CD4-positive, alpha-beta memory T cell (primary cell): ENCODE measurements at regions of chr14 and their contacts with region 1.

Region 1: GRCh38 chr14:105760691-105761346 is 234.4 kb downstream of the TMEM121 start:
- DNase-seq: no peak
- H3K4me3 ChIP-seq: no peak overlapping the region
- H3K4me3 Mint-ChIP-seq: no peak overlapping the region
- H3K27ac ChIP-seq: no peak overlapping the region
- H3K27ac Mint-ChIP-seq: no peak overlapping the region
- H3K4me1 ChIP-seq: no peaks in the 10 kb centered on the region
- H3K4me1 Mint-ChIP-seq: peaks cover 0 to 3% (median 0%) of the 10 kb centered on the region in 4 donors
- H3K27me3 ChIP-seq: no peaks in the 10 kb centered on the region
- H3K27me3 Mint-ChIP-seq: peaks cover 0 to 11% of the 10 kb centered on the region in 2 donors

Region 2: GRCh38 chr14:105448706-105449111 is 312.1 kb before region 1 on chr14:
- CTCF ChIA-PET with region 1: no interaction called
- POLR2A ChIA-PET with region 1: no interaction called
- intact Hi-C with region 1: no loop called
- DNase-seq: peak; percentile 52 to 77 (median 64)
- H3K4me3 ChIP-seq: no peak overlapping the region
- H3K4me3 Mint-ChIP-seq: no peak overlapping the region
- H3K27ac ChIP-seq: no peak overlapping the region
- H3K27ac Mint-ChIP-seq: peak overlapping the region in 2 of 7 donors; percentile 15 to 42
- H3K4me1 ChIP-seq: no peaks in the 10 kb centered on the region
- H3K4me1 Mint-ChIP-seq: no peaks in the 10 kb centered on the region
- H3K27me3 ChIP-seq: no peaks in the 10 kb centered on the region
- H3K27me3 Mint-ChIP-seq: no peaks in the 10 kb centered on the region

Region 3: DNA sequence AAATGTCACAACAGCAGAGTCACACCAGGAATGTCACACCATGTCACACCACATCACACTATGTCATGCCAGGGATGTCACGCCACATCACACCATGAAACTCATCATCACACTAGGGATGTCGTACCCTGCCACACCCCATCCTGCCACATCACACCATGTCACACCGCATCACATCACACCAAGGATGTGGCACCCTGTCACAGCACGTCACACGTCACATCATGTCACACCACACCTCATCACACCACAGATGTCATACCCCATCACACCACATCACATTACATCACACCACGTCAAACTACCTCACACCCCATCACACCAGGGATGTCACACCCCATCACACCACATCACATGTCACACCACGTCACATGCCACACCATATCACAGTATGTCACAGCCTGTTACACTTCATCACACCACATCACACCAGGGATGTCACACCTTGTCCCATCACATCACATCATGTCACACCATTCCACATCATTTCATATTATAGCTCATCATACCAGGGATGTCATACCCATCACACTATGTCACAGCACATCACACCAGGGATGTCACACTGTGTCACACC is 143.5 kb before region 1 on chr14:
- CTCF ChIA-PET with region 1: no interaction called
- POLR2A ChIA-PET with region 1: no interaction called
- intact Hi-C with region 1: loop called (anchors 2 kb)
- DNase-seq: no peak
- H3K4me3 ChIP-seq: no peak overlapping the region
- H3K4me3 Mint-ChIP-seq: no peak overlapping the region
- H3K27ac ChIP-seq: no peak overlapping the region
- H3K27ac Mint-ChIP-seq: no peak overlapping the region
- H3K4me1 ChIP-seq: no peaks in the 10 kb centered on the region
- H3K4me1 Mint-ChIP-seq: peaks cover 0 to 4% (median 0%) of the 10 kb centered on the region in 4 donors
- H3K27me3 ChIP-seq: no peaks in the 10 kb centered on the region
- H3K27me3 Mint-ChIP-seq: peaks cover 7 to 15% of the 10 kb centered on the region in 2 donors

Region 4: DNA sequence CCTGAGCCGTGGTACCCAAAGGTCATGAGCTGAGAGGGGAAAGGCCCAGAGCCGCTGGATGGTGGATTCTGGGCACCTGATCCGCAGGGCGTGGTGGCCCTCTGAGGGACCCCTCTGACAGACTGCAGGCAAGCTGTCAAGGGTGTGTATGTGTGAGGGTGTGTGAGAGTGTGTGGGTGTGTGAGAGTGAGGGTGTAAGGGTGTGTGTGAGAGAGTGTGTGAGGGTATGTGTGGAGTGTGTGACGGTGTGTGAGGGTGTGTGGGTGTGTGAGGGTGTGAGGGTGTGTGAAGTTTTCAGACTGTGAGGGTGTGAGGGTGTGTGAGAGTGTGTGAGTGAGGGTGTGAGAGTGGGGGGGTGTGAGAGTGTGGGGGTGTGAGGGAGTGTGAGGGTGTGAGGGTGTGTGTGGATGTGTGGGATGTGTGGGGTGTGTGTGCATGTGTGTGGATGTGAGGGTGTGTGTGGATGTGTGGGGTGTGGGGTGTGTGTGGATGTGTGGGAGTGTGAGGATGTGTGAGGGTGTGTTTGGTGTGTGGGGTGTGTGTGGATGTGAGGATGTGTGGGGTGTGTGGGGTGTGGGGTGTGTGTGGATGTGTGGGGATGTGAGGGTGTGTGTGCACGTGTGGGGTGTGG is 77.8 kb before region 1 on chr14:
- CTCF ChIA-PET with region 1: no interaction called
- POLR2A ChIA-PET with region 1: no interaction called
- intact Hi-C with region 1: no loop called
- DNase-seq: no peak
- H3K4me3 ChIP-seq: no peak overlapping the region
- H3K4me3 Mint-ChIP-seq: no peak overlapping the region
- H3K27ac ChIP-seq: no peak overlapping the region
- H3K27ac Mint-ChIP-seq: no peak overlapping the region
- H3K4me1 ChIP-seq: no peaks in the 10 kb centered on the region
- H3K4me1 Mint-ChIP-seq: peaks cover 0 to 9% (median 0%) of the 10 kb centered on the region in 4 donors
- H3K27me3 ChIP-seq: no peaks in the 10 kb centered on the region
- H3K27me3 Mint-ChIP-seq: no peaks in the 10 kb centered on the region